Heart left ventricle (tissue), 16 donors: ENCODE measurements at regions of chr21 and their contacts with region 1.

Region 1: GRCh38 chr21:38733973-38734546 is 71.7 kb upstream of the ETS2 start:
- DNase-seq: peak; percentile 83 to 94 (median 87)
- ATAC-seq: peak; percentile 78 to 94 (median 93)
- H3K4me3 ChIP-seq: peak overlapping the region in 9 of 12 donors; percentile 9 to 50 (median 38)
- H3K27ac ChIP-seq: peak overlapping the region in 11 of 12 donors; percentile 19 to 85 (median 65)
- H3K4me1 ChIP-seq: peaks cover 0 to 25% (median 8%) of the 10 kb centered on the region in 12 donors
- H3K27me3 ChIP-seq: no peaks in the 10 kb centered on the region
- CTCF ChIP-seq: peak; percentile 86 to 96 (median 92)
- POLR2A ChIP-seq: peak in 1 of 2 donors; percentile 17

Region 2: DNA sequence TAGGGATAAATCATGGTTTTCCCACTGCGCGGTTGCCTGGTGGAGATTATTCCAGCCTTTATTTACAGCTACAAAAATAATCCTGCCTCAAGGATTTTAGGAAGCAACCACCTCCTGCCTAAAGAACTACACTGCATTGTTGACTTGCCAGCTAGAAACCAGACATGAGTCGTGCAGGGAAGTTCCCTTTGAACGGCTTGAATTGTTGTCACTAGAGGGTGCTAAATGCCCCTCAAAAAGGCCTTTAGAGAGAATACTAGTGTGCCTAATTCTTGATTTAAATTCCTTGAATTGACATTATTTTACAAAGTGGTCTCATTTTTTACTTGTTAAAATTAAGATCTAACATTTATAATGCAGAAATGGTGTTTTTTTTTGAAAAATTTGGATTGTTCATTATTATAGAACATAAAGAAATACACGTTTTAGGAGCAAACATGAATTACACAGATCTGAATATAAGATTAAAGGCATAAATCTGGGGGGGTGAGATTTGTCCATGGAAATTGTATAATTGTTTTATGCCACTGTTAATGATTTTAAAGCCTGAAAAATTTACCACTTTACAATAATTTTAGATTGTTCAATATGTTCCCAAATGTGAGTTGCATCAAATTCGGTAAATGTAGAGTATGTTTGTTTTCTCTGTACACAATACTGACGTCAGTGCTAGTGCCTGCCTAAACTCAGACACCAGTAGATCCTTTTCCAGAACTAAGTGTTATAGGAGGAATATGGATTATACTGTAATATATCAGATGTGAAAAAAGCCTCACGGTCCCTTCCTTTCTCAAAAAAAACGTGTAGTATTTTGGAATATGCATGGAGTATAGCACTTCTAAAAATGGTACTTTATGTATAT is 228.2 kb before region 1 on chr21:
- intact Hi-C with region 1: loop called in 2 of 10 experiments (anchors 5 kb)
- DNase-seq: peak in 1 of 5 donors; percentile 52
- ATAC-seq: peak; percentile 83 to 92 (median 84)
- H3K4me3 ChIP-seq: peak overlapping the region in 4 of 12 donors; percentile 1 to 39 (median 12)
- H3K27ac ChIP-seq: no peak overlapping the region
- H3K4me1 ChIP-seq: peaks cover 0 to 28% (median 6%) of the 10 kb centered on the region in 12 donors
- H3K27me3 ChIP-seq: no peaks in the 10 kb centered on the region
- CTCF ChIP-seq: peak; percentile 57 to 87 (median 73)
- POLR2A ChIP-seq: no peak

Region 3: DNA sequence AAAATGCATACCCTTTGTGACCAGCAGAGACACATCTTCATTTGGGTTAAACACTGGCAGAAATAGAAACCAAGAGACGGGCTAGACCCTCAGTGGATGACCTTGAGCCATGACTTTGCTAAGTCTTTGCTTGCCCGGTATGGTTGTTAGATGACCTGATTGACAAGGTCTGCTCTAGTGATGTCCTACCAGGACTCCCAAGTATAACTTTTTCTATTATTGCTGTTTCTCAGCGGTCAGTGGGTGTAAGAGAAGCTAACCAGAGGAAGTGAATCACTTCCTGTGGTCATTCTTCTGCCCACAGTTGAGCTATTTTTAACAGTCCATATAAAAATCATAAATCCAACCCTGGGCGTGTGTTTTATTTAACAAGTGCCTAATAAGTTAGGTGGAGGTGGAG is 54.5 kb before region 1 on chr21:
- intact Hi-C with region 1: no loop called
- DNase-seq: no peak
- ATAC-seq: peak in 3 of 4 donors; percentile 64 to 86 (median 84)
- H3K4me3 ChIP-seq: no peak overlapping the region
- H3K27ac ChIP-seq: peak overlapping the region in 2 of 12 donors; percentile 21 to 31
- H3K4me1 ChIP-seq: peaks cover 0 to 19% (median 7%) of the 10 kb centered on the region in 12 donors
- H3K27me3 ChIP-seq: peaks cover 0 to 57% (median 0%) of the 10 kb centered on the region in 9 donors
- CTCF ChIP-seq: no peak
- POLR2A ChIP-seq: no peak

Region 4: DNA sequence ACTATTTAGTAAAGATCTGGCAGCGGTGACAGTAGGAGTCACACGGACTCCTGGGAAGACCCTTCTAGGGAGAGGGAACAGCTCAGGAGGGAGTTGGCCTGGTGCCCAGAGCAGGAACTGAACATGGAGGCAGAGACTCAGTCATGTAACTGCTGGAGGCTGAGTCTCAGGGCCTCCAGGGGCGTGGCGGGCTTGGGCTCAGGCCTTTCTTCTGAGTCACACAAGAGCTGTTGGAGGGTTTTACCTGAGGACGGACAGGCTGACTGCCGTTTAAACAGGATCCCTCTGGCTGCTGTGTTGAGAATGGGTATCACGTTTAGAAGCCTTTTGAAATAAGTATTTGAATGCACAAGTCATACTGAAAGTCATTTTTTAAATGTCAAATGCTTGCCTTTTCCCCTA is 64.4 kb after region 1 on chr21:
- intact Hi-C with region 1: loop called in 4 of 10 experiments (anchors 5 to 10 kb)
- DNase-seq: no peak
- ATAC-seq: no peak
- H3K4me3 ChIP-seq: no peak overlapping the region
- H3K27ac ChIP-seq: no peak overlapping the region
- H3K4me1 ChIP-seq: peaks cover 0 to 5% (median 0%) of the 10 kb centered on the region in 12 donors
- H3K27me3 ChIP-seq: no peaks in the 10 kb centered on the region
- CTCF ChIP-seq: no peak
- POLR2A ChIP-seq: no peak

Region 5: DNA sequence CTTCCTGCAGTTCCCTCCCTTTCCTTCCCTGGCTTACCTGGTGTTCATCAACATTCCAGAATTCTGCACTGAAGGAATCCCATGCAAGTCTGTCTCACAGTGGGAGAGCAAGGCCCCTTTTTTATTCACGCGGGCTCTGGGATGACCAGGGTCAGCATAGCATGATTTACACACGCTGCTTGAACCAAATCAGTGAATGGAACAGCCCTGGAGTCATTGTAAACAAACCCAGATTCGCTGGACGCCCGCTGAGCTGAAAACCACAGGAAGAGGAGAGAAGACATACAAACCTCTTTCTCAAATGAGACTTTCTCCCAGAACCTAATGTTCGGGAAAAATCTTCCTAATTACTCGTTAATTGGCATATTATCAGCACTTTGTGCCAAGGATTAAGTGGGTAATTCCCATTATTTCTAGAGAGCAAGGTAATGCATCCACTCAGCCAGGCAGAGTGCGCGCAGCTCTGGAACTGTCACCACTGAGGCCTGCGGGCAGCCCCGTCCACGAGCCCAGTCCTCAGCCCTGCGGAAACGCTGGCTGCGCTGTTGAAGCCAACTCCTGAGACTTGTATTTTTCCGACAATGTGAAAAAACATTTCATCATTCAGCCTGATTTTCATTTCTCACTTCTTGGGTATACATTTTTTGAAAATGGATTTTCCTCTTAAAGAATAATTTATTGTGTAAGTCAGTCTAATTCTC is 211.6 kb after region 1 on chr21:
- intact Hi-C with region 1: no loop called
- DNase-seq: no peak
- ATAC-seq: no peak
- H3K4me3 ChIP-seq: no peak overlapping the region
- H3K27ac ChIP-seq: no peak overlapping the region
- H3K4me1 ChIP-seq: no peaks in the 10 kb centered on the region
- H3K27me3 ChIP-seq: no peaks in the 10 kb centered on the region
- CTCF ChIP-seq: no peak
- POLR2A ChIP-seq: no peak

Region 6: GRCh38 chr21:38985568-38986378 is 251.7 kb after region 1 on chr21:
- intact Hi-C with region 1: loop called in 1 of 10 experiments (anchors 5 kb)
- DNase-seq: peak; percentile 74 to 89 (median 82)
- ATAC-seq: peak; percentile 53 to 74 (median 70)
- H3K4me3 ChIP-seq: no peak overlapping the region
- H3K27ac ChIP-seq: peak overlapping the region in 10 of 12 donors; percentile 10 to 75 (median 58)
- H3K4me1 ChIP-seq: peaks cover 7 to 68% (median 63%) of the 10 kb centered on the region in 12 donors
- H3K27me3 ChIP-seq: no peaks in the 10 kb centered on the region
- CTCF ChIP-seq: no peak
- POLR2A ChIP-seq: no peak

Region 7: GRCh38 chr21:39071623-39072214 is 337.7 kb after region 1 on chr21:
- intact Hi-C with region 1: loop called in 4 of 10 experiments (anchors 1 to 10 kb)
- DNase-seq: no peak
- ATAC-seq: peak in 3 of 4 donors; percentile 33 to 58 (median 44)
- H3K4me3 ChIP-seq: no peak overlapping the region
- H3K27ac ChIP-seq: peak overlapping the region in 6 of 12 donors; percentile 12 to 70 (median 52)
- H3K4me1 ChIP-seq: peaks cover 0 to 45% (median 12%) of the 10 kb centered on the region in 12 donors
- H3K27me3 ChIP-seq: no peaks in the 10 kb centered on the region
- CTCF ChIP-seq: no peak
- POLR2A ChIP-seq: no peak

Region 8: DNA sequence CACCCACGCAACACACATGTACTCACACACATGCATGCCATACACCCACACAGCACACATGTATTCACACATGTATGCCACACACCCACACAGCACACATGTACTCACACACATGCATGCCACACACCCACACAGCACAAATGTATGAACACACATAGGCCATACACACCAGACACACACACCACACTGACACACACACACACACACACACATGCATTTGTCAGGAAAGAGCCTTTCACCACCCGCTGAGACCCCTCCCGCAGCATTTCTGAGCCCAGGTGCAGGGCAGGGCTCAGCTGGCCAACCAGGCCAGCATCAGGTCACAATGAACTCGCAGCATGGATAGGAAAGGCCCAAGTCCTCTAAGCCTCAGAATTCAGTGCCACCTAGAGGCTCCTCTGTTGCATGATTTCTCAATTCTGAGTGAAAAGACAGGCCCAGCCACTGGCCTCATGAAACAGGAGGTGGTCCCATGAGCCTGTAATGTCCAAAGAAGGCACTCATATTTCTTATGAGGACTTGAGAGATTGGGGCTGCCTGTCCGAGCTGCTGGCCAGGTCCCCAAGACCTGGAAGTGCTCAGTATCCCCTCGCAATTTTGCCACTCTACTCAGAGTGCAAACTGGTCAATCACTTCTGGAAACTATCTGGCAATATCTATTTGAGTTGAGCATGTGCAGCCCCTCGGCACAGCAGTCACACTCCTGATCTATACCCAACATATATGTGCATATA is 391.9 kb after region 1 on chr21:
- intact Hi-C with region 1: loop called in 4 of 10 experiments (anchors 1 to 2 kb)
- DNase-seq: peak in 4 of 5 donors; percentile 46 to 62 (median 59)
- ATAC-seq: peak; percentile 64 to 98 (median 95)
- H3K4me3 ChIP-seq: no peak overlapping the region
- H3K27ac ChIP-seq: peak overlapping the region in 2 of 12 donors; percentile 10 to 48
- H3K4me1 ChIP-seq: peaks cover 0 to 19% (median 7%) of the 10 kb centered on the region in 12 donors
- H3K27me3 ChIP-seq: no peaks in the 10 kb centered on the region
- CTCF ChIP-seq: peak; percentile 48 to 76 (median 63)
- POLR2A ChIP-seq: no peak

Region 9: GRCh38 chr21:39137248-39138178 is 403.5 kb after region 1 on chr21:
- intact Hi-C with region 1: loop called (anchors 1 to 5 kb)
- DNase-seq: no peak
- ATAC-seq: peak in 1 of 4 donors; percentile 26
- H3K4me3 ChIP-seq: no peak overlapping the region
- H3K27ac ChIP-seq: peak overlapping the region in 4 of 12 donors; percentile 11 to 39 (median 32)
- H3K4me1 ChIP-seq: peaks cover 0 to 11% (median 0%) of the 10 kb centered on the region in 12 donors
- H3K27me3 ChIP-seq: no peaks in the 10 kb centered on the region
- CTCF ChIP-seq: no peak
- POLR2A ChIP-seq: no peak

Region 10: DNA sequence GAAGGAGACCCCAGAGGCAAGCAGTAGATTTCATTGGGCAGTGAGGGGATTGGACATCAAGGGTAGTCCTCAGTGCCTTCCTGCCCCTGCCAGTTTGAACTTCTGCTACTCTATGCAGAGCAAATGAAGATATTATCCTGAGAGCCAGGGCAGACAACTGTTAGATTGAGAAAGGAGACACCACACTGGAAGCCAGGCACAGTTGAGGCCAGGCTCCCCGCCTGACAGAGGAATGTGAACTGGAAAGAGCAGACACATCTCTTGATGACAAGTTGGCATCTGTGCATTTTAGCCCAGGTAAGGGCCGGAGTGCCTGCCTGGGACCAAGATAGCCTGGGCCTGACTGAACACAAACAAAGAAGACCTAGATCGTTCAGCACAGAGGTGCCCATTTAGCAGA is 733.7 kb after region 1 on chr21:
- intact Hi-C with region 1: no loop called
- DNase-seq: no peak
- ATAC-seq: peak in 1 of 4 donors; percentile 24
- H3K4me3 ChIP-seq: no peak overlapping the region
- H3K27ac ChIP-seq: no peak overlapping the region
- H3K4me1 ChIP-seq: no peaks in the 10 kb centered on the region
- H3K27me3 ChIP-seq: no peaks in the 10 kb centered on the region
- CTCF ChIP-seq: no peak
- POLR2A ChIP-seq: no peak